GM10248 (cell line): ENCODE measurements at regions of chr14 and their contacts with region 1.

Region 1: GRCh38 chr14:67426983-67427606 is 15.1 kb upstream of the PLEK2 start:
- DNase-seq: peak; percentile 86
- CTCF ChIP-seq: peak; percentile 83

Region 2: DNA sequence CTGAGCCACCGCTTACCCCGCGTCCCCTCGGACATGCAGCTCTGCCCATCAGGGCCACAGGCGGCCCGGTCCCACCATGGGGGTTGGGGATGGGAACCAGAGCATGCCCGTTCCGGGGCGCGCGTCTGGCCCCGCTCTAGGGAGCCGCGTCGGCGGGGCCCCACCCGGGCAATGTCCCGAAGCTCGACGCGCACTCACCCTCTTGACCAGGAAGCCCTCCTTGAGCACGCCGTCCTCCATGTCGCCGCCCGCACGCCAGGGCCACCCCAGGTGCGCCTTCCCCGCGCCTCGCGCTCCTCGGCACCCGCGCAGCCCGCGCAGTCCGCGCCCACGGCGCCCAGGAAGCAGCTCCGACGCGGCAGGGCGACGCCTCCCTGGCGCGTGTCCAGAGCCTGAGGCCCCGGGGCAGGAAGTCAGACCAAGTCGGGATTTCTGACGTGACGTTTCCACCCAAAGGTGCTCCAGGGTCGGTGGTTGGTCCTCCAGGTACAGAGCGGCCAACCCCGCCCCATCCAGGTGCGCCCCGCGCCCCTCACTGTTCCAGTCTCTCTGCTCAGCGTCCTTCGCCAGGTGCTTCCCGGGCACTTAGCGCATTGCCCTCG is 15.2 kb before region 1 on chr14 and contains the start of gene PLEK2:
- CTCF ChIA-PET with region 1: interaction called, 51 read pairs
- POLR2A ChIA-PET with region 1: no interaction called
- DNase-seq: no peak
- CTCF ChIP-seq: no peak

Region 3: GRCh38 chr14:67491741-67492505 is 64.8 kb after region 1 on chr14:
- CTCF ChIA-PET with region 1: interaction called, 10 read pairs
- POLR2A ChIA-PET with region 1: no interaction called
- DNase-seq: no peak
- CTCF ChIP-seq: no peak

Region 4: GRCh38 chr14:67526676-67527459 is 99.8 kb after region 1 on chr14:
- CTCF ChIA-PET with region 1: interaction called, 35 read pairs
- POLR2A ChIA-PET with region 1: no interaction called
- DNase-seq: peak; percentile 53
- CTCF ChIP-seq: peak; percentile 53

Region 5: DNA sequence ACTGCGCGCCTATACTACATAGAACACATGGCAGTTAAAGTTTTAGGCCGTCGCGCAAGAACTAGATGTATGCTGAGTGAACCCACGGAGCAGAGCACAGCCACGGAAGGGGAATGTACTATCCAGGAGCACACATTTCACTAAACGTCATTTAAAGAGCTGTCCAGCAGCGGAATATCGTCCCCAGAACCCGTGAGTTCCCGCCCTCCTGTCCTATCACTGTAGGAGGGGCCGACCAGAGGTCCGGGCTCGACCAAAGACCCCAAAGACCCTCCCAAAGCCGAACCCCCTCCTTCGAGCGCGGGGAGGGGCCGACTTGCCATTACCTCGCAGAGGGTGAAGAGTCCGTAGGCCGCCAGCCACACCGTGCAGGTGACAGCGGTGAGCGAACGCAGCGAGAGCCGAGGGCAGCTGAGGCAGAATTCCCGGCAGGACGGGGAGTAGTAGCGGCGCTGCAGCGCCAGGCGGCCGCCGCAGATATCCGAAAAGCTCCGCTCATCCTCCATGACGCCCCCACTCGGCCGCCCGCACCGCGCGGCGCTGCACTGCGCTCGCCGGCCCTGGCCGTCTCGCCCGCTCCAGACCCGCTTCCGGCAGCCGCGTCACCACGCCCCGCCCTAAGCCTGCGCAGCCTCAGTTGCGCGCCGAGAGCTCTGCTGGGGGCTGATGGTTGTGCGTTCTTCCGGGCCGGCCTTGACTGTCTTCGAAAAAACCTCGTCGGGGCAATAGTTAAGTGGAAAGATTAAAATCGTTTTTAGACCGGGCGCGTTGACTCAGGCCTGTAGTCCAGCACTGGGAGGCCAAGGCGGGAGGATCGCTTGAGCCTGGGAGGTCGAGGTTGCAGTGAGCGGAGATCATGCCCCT is 172.8 kb after region 1 on chr14 and contains the start of gene PIGH:
- CTCF ChIA-PET with region 1: interaction called, 18 read pairs
- POLR2A ChIA-PET with region 1: no interaction called
- DNase-seq: peak; percentile 95
- CTCF ChIP-seq: peak; percentile 54

Region 6: DNA sequence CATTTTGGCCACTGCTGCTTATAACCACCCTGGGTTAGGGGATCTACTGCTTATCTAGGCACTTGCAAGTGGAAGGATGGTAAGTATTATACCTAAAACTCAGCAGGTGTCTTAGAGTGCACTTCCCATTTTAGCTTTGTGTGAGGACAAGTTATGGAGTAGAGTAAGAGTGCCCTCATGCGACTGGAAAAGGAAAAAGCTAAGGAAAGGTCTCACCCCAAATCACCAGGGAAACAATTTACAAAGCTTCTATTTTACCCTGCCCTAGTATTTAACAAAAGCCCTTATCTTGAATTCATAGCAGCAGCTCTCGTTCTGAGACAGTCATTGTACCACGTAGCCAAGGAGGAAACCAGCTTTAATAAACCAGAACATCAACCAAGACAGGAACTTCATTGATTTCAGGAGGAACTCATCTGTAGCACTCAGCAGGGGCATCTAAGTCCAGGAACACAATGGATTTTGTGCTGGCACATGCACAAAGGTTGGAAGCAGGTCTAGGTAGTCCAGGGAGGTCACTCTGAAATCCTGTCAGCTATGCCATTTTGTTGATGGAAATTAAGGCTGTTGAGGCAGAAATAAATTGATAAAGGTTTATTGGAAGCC is 277.5 kb after region 1 on chr14:
- CTCF ChIA-PET with region 1: interaction called, 41 read pairs
- POLR2A ChIA-PET with region 1: no interaction called
- DNase-seq: peak; percentile 67
- CTCF ChIP-seq: peak; percentile 72